Natural killer cell (primary cell): ENCODE measurements at regions of chr9 and their contacts with region 1.

Region 1: DNA sequence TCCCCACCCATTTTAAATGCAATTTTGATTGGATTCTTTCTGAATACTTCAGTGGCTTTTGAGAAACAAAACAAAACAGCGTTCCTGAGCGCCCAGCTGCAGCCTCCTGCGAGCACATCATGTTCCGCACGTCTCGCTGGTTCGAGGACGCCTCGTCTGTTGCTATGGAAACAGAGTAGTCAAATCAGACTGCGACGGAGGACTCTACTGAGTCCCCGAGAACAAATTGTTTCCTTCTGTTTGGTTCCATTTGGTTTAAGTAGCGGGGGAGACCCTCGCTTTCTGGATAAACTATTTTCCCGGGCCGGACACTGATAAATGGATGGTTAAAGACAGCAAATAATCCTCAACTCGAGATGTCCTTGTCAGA is 69.0 kb downstream of the SLC28A3 start:
- DNase-seq: peak in 1 of 2 donors; percentile 52
- ATAC-seq: peak in 2 of 3 donors; percentile 63 to 64
- H3K4me3 ChIP-seq: no peak overlapping the region
- H3K4me3 Mint-ChIP-seq: peak overlapping the region; percentile 53
- H3K27ac ChIP-seq: no peak overlapping the region
- H3K27ac Mint-ChIP-seq: no peak overlapping the region
- H3K4me1 ChIP-seq: no peaks in the 10 kb centered on the region
- H3K4me1 Mint-ChIP-seq: peaks cover 6 to 8% of the 10 kb centered on the region in 2 donors
- H3K27me3 ChIP-seq: peaks cover 2% of the 10 kb centered on the region
- H3K27me3 Mint-ChIP-seq: peaks cover 30 to 56% of the 10 kb centered on the region in 2 donors
- CTCF ChIP-seq: no peak

Region 2: DNA sequence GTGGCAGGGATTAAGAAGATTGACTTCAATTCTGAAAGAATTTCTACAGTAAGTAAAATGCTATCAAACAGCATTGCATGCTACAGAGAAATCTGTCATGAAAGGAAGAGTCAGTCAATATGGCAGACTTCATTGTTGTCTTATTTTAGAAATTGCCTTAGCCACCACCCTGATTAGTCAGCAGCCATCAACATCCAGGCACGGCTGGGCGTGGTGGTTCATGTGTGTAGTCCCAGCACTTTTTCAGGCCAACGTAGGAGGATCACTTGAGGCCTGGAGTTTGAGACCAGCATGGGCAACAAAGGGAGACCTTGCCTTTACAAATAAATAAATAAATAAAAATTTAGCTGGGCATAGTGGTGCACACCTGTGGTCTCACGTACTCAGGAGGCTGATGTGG is 244.3 kb before region 1 on chr9:
- intact Hi-C with region 1: loop called (anchors 10 kb)
- DNase-seq: no peak
- ATAC-seq: no peak
- H3K4me3 ChIP-seq: no peak overlapping the region
- H3K4me3 Mint-ChIP-seq: no peak overlapping the region
- H3K27ac ChIP-seq: no peak overlapping the region
- H3K27ac Mint-ChIP-seq: no peak overlapping the region
- H3K4me1 ChIP-seq: no peaks in the 10 kb centered on the region
- H3K4me1 Mint-ChIP-seq: no peaks in the 10 kb centered on the region
- H3K27me3 ChIP-seq: no peaks in the 10 kb centered on the region
- H3K27me3 Mint-ChIP-seq: peaks cover 9 to 11% of the 10 kb centered on the region in 2 donors
- CTCF ChIP-seq: no peak